RWPE1 (cell line): ENCODE measurements at regions of chr2 and their contacts with region 1.

Region 1: GRCh38 chr2:96951093-96951654 is 35.2 kb downstream of the FAM178B start:
- DNase-seq: peak; percentile 83
- H3K27ac ChIP-seq: no peak overlapping the region
- CTCF ChIP-seq: peak; percentile 96

Region 2: DNA sequence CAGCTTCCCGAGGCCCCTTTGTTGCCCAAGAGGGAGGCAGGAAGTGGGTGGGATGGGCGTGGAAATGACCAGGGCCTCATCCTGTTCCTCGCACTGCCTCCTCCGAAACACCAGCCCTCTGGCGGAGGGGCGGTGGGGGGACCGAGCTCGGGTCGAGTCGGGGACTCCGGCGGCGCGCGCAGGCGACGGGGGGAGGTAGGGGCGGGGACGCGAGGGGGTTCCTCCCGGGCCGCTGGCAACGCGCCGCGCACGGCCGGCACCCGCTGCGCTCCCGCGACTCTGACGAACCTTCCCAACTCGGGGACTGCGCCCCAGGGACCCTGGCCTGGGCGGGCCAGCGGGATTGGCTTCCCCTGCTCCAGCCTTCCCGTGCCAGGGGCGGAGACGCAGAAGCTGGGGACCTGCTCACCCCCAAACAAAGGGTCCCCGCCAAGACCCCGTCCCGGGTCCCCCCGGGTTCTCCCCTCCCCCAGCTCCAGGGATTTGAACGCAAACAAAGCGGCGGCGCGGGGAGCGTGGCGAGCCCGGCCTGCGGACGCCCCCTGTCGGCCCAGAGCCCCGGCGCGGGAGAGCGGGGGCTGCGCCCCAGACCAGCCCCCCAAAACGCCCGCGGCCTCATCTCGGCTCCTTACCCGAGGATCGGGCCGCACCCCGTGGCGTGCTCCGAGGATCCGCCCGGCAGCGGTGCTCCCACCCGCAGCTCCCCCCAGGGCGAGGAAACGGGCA is 82.5 kb before region 1 on chr2:
- CTCF ChIA-PET with region 1: interaction called, 27 read pairs
- POLR2A ChIA-PET with region 1: no interaction called
- DNase-seq: peak; percentile 82
- H3K27ac ChIP-seq: peak overlapping the region; percentile 89
- CTCF ChIP-seq: peak; percentile 72

Region 3: DNA sequence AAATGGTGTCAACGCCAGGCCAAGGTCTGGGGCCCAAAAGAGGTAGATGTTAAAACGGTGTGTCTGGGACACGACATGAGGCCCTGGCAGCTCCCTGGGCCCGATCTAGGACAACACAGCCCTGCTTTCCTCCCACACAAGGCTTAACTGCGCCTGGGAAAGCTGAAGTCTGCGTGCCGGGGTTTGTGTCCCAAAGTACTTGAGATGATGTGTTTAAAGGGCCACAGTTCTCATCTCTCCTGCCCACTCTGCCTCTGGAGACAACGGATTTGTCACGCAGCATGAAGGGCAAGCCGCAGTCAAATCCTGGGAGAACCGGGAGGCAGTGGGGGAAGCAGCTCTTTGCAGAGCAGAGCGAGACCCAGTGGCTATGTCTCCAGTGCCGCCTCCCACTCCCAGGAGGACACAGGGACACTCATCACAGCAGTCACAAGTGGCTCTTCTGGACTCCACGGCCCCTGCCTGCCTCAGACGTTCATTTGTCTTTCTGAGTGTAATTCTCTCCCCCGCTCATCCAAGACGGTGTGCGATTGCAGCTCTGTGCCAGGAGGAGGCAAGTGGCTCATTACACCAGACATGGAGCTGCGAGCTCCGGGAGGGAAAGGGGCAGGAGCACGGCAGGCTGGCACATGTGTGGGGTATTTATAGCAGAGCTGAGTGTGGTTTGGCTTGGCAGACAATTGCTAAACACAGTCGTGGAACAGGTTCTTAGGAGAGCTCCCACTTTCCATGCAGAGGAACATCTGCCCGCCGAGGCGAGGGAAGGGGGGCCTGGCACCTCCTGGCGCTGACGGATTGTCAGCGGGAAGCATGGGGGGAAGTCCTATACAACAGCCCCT is 23.6 kb before region 1 on chr2:
- CTCF ChIA-PET with region 1: interaction called, 23 read pairs
- POLR2A ChIA-PET with region 1: interaction called, 6 read pairs
- DNase-seq: peak; percentile 88
- H3K27ac ChIP-seq: peak overlapping the region; percentile 43
- CTCF ChIP-seq: peak; percentile 41